Heart right ventricle (tissue), 16 donors: ENCODE measurements at regions of chr12 and their contacts with region 1.

Region 1: DNA sequence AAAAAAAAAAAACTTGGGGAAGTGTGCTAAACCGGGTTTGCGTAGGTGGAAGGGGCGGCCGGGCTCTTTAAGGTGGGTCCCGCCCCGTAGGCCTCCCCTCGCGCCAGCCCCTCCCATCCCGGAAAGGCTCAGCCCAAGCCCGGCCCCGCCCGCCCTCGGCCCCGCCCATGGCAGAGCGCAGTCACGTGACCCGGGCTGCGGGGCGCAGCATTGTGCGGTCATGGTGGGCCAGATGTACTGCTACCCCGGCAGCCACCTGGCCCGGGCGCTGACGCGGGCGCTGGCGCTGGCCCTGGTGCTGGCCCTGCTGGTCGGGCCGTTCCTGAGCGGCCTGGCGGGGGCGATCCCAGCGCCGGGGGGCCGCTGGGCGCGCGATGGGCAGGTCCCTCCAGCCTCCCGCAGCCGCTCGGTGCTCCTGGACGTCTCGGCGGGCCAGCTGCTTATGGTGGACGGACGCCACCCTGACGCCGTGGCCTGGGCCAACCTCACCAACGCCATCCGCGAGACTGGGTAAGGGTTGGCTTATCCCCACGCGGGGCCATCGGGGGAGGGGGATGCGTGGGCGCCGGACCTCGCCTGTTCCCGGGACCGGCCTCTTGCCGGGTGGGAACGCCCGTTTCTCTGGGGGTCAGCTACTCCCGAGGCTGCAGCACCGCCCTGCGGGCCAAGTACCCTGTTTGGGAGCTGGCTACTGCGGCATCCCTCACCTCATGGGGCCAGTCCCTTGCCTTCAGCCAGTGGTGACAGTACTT is at the start of gene PLBD2:
- DNase-seq: peak; percentile 94 to 96
- ATAC-seq: peak; percentile 96 to 99 (median 98)
- H3K4me3 ChIP-seq: peak within 1 kb of the TSS; percentile 38 to 96 (median 78)
- H3K27ac ChIP-seq: peak within 1 kb of the TSS; percentile 37 to 95 (median 91)
- H3K4me1 ChIP-seq: peaks cover 5 to 36% (median 17%) of the 10 kb centered on the region in 9 donors
- H3K27me3 ChIP-seq: no peaks in the 10 kb centered on the region
- CTCF ChIP-seq: no peak
- total RNA-seq, gene PLBD2: 24.7 to 53.9 (median 36.1) TPM

Region 2: DNA sequence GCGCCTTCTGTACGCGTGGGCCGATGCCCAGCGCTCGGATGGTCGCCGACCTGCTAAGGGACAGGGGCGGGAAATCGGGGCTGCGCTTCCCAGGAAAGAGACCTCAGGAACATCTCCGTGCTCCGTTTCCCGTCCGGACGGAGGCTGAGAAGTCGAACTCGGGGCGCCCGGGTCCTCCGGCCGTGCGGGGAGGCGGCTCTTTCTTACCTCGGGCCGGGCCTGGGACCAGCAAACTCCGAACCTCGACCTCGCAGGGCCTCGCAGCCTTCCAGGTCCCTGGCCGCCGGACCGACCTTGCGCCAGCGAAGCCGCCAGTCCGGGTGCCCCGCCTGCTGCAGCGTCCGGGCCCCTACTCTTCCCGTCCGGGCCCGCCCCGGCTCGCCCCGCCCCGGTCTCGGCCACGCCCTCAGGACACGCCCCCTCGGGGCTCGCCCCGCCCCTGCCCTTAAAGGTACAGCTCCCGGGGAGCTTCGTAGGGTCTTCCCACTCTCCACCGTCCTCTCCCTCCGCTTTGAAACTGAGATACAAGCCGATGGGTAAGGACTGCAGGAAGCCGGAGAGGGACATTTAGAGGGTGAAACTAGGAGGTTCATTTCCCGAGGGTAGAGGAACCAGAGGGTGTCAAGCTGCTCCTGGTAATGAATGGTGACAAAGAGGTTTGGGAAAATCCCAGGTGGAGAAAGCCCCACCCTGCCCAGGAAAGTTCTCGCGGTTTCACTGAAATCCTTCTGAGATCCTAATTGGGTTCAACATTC is 23.6 kb before region 1 on chr12 and contains the start of gene SLC8B1:
- intact Hi-C with region 1: loop called in 1 of 10 experiments (anchors 1 kb)
- DNase-seq: peak; percentile 88 to 93
- ATAC-seq: peak; percentile 98 to 100 (median 99)
- H3K4me3 ChIP-seq: peak within 1 kb of the TSS; percentile 64 to 96 (median 80)
- H3K27ac ChIP-seq: peak within 1 kb of the TSS; percentile 37 to 94 (median 84)
- H3K4me1 ChIP-seq: peaks cover 0 to 40% (median 23%) of the 10 kb centered on the region in 9 donors
- H3K27me3 ChIP-seq: no peaks in the 10 kb centered on the region
- CTCF ChIP-seq: no peak
- total RNA-seq, gene SLC8B1: 7.2 to 15.0 (median 11.9) TPM

Region 3: GRCh38 chr12:113479590-113480335 is 121.2 kb after region 1 on chr12:
- intact Hi-C with region 1: no loop called
- DNase-seq: peak; percentile 46 to 55
- ATAC-seq: peak in 3 of 8 donors; percentile 47 to 58 (median 58)
- H3K4me3 ChIP-seq: no peak overlapping the region
- H3K27ac ChIP-seq: no peak overlapping the region
- H3K4me1 ChIP-seq: peaks cover 0 to 6% (median 0%) of the 10 kb centered on the region in 9 donors
- H3K27me3 ChIP-seq: peaks cover 23 to 98% (median 96%) of the 10 kb centered on the region in 7 donors
- CTCF ChIP-seq: no peak